ENCODE measurements at regions of chrX and their contacts with region 1.

Region 1: GRCh38 chrX:46573331-46573891 is at the start of gene CHST7:
- DNase-seq: peak; percentile 46
- H3K4me3 Mint-ChIP-seq: peak within 1 kb of the TSS; percentile 80
- H3K27ac Mint-ChIP-seq: peak within 1 kb of the TSS; percentile 91
- H3K4me1 Mint-ChIP-seq: peaks cover 38% of the 10 kb centered on the region
- H3K27me3 Mint-ChIP-seq: no peaks in the 10 kb centered on the region
- total RNA-seq, gene CHST7: 5.2 and 6.2 TPM in 2 replicates

Region 2: GRCh38 chrX:46446727-46447378 is 126.6 kb before region 1 on chrX:
- intact Hi-C with region 1: loop called (anchors 1 kb)
- DNase-seq: peak; percentile 76
- H3K4me3 Mint-ChIP-seq: peak overlapping the region; percentile 84
- H3K27ac Mint-ChIP-seq: peak overlapping the region; percentile 92
- H3K4me1 Mint-ChIP-seq: peaks cover 25% of the 10 kb centered on the region
- H3K27me3 Mint-ChIP-seq: no peaks in the 10 kb centered on the region

Region 3: GRCh38 chrX:46587158-46587557 is 13.7 kb after region 1 on chrX:
- intact Hi-C with region 1: loop called (anchors 1 kb)
- DNase-seq: no peak
- H3K4me3 Mint-ChIP-seq: peak overlapping the region; percentile 3
- H3K27ac Mint-ChIP-seq: peak overlapping the region; percentile 70
- H3K4me1 Mint-ChIP-seq: peaks cover 25% of the 10 kb centered on the region
- H3K27me3 Mint-ChIP-seq: no peaks in the 10 kb centered on the region

Region 4: GRCh38 chrX:46628460-46629371 is 55.3 kb after region 1 on chrX:
- intact Hi-C with region 1: loop called (anchors 2 kb)
- DNase-seq: no peak
- H3K4me3 Mint-ChIP-seq: peak overlapping the region; percentile 66
- H3K27ac Mint-ChIP-seq: peak overlapping the region; percentile 93
- H3K4me1 Mint-ChIP-seq: peaks cover 34% of the 10 kb centered on the region
- H3K27me3 Mint-ChIP-seq: no peaks in the 10 kb centered on the region

Region 5: DNA sequence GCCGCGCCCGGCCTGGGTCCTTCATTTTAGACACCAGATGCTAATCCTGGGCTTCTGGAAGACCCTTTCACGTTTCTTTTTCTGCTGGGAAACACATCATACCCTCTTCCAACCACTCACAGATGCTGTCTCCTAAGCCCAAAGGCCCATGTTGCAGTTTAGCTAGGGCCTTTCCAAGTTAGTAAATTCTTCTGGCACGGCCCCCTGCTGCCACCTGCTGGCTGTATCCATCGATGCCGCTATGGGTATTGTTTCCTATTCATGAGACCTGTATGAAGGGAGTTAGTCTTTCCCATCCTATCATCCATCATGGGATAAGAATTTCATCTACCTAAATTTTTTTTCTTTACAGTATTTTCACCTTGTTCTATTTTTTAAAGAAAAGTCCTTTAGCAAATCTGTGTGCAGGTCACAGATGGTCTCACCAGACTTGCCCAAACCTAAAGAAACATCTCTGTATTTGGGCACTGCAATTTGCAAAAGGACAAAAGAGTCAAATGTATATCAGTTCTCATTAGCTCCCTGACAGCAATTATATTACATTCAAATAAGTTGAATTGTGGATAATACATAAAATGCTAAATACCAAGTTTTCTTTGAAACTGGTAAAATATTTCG is 223.3 kb after region 1 on chrX:
- intact Hi-C with region 1: loop called (anchors 5 kb)
- DNase-seq: peak; percentile 51
- H3K4me3 Mint-ChIP-seq: no peak overlapping the region
- H3K27ac Mint-ChIP-seq: no peak overlapping the region
- H3K4me1 Mint-ChIP-seq: peaks cover 18% of the 10 kb centered on the region
- H3K27me3 Mint-ChIP-seq: no peaks in the 10 kb centered on the region

Region 6: DNA sequence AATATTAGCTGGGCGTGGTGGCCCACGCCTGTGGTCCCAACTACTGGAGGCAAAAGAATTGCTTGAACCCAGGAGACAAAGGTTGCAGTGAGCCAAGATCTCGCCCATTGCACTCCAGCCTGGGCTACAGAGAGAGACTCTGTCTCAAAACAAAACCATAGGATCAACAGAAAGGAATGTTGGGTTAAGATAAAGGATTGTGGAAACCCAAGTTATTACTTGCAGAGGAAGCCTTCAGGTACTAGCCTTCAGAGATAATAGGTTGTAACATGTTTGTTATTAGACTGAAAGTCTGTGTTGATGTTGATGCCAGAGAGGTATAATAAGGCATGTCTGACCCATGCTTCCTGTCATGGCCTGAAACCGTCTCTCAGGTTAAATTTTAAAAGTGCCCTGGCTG is 1606.3 kb after region 1 on chrX:
- intact Hi-C with region 1: no loop called
- DNase-seq: no peak
- H3K4me3 Mint-ChIP-seq: no peak overlapping the region
- H3K27ac Mint-ChIP-seq: no peak overlapping the region
- H3K4me1 Mint-ChIP-seq: no peaks in the 10 kb centered on the region
- H3K27me3 Mint-ChIP-seq: no peaks in the 10 kb centered on the region